Activated naive CD4-positive, alpha-beta T cell treated with anti-CD3 and anti-CD28 coated beads, Interleukin-2, amount 10 ng/mL, durations not matched to agents 7 days and 5 days (primary cell): ENCODE measurements at regions of chr9 and their contacts with region 1.

Region 1: GRCh38 chr9:91131433-91131839 is 230.3 kb downstream of the AUH start:
- DNase-seq: peak; percentile 79
- H3K4me3 Mint-ChIP-seq: peak overlapping the region; percentile 31
- H3K27ac Mint-ChIP-seq: peak overlapping the region; percentile 88
- H3K4me1 Mint-ChIP-seq: peaks cover 31% of the 10 kb centered on the region
- H3K27me3 Mint-ChIP-seq: peaks cover 10% of the 10 kb centered on the region

Region 2: DNA sequence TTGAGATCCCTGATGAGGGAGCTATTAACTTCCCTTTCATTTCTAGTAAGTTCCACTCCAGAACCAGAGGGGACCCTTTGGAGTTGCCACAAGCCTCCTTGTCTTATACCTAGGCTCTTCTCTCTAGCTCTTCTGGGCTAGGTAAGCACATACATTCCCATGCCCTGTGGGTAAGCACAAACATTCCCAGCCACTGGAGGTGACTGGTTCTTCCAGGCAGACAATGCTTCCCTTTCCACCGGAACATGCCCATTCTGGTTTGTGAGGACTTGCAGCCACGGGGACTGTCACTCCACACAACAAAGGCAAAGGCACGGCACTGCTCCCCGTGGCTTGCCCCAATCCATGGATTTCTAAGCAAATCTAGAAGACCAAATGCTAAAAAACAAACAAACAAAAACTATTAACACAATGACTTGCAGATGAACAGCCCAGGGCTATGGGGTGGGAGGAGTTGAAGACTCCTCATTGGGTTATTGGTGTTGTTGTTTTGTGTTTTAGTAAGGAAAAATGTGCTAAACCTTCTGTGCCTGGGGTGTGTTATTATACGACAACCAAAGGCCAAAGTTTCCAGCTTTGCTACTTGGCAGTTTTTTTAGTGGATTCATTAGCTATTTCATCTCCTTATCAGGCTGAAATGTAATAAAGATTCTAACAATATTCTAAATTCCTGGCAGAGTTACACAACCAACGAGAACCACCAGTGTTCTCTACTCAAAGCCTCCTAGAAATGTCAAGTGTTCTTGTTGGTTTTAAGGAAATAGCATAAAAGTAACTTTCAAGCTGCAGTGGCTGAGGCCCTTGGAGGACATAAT is 53.6 kb before region 1 on chr9:
- CTCF ChIA-PET with region 1: no interaction called
- DNase-seq: no peak
- H3K4me3 Mint-ChIP-seq: no peak overlapping the region
- H3K27ac Mint-ChIP-seq: no peak overlapping the region
- H3K4me1 Mint-ChIP-seq: no peaks in the 10 kb centered on the region
- H3K27me3 Mint-ChIP-seq: peaks cover 64% of the 10 kb centered on the region

Region 3: GRCh38 chr9:91150998-91151717 is 19.7 kb after region 1 on chr9:
- CTCF ChIA-PET with region 1: interaction called, 10 read pairs
- DNase-seq: peak; percentile 56
- H3K4me3 Mint-ChIP-seq: peak overlapping the region; percentile 42
- H3K27ac Mint-ChIP-seq: peak overlapping the region; percentile 88
- H3K4me1 Mint-ChIP-seq: peaks cover 79% of the 10 kb centered on the region
- H3K27me3 Mint-ChIP-seq: peaks cover 8% of the 10 kb centered on the region

Region 4: GRCh38 chr9:91334053-91334452 is 202.6 kb after region 1 on chr9:
- CTCF ChIA-PET with region 1: no interaction called
- DNase-seq: no peak
- H3K4me3 Mint-ChIP-seq: no peak overlapping the region
- H3K27ac Mint-ChIP-seq: no peak overlapping the region
- H3K4me1 Mint-ChIP-seq: peaks cover 4% of the 10 kb centered on the region
- H3K27me3 Mint-ChIP-seq: no peaks in the 10 kb centered on the region